Vagina (tissue), 2 donors: ENCODE measurements at regions of chr17 and their contacts with region 1.

Region 1: GRCh38 chr17:81339534-81340296 is 44.6 kb upstream of the SLC38A10 start:
- DNase-seq: no peak
- H3K4me3 ChIP-seq: no peak overlapping the region
- H3K27ac ChIP-seq: no peak overlapping the region
- H3K4me1 ChIP-seq: peaks cover 77% of the 10 kb centered on the region
- H3K27me3 ChIP-seq: no peaks in the 10 kb centered on the region
- CTCF ChIP-seq: no peak
- POLR2A ChIP-seq: no peak

Region 2: DNA sequence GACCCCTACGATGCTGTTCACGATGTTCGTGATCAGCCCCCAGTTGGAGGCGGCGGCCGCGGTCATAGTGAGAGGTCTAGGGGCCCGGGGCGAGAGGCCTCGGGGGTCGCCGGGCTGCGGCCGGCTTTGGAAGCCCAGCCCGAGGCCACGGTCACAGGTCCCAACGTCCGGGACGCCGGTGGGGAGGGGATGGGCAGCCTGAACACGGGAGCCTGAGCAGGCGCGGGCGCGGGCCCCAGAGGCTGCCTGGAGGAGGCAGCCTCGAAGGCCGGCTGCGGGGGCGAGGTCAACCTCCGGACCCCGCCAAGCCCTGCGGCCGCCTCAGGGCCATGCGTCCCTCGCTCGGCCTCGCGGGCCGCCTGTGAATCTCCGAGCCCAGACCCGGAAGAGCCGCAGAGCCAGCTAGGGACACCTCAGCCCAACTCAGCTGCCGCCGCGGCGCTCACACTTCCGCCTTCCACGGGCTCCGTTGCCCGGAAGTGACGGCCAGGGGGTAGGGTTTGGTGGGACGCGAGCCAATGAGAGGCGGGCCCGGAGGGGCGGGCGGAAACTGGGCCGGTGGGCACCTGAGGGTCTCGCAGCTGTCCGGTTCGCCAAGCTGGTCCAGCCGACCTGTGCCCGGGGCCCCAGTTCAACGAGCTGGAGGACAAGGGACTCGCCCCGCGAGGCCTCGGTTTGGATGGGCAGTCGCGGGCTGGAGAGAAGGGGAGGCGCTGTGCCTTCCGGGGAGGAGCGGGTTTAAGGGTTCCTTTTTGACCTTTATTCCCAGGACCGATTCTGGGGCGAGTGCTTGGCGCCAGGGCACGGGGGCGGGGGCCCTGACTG is 44.6 kb before region 1 on chr17 and contains the start of gene SLC38A10:
- intact Hi-C with region 1: loop called (anchors 5 kb)
- DNase-seq: no peak
- H3K4me3 ChIP-seq: peak within 1 kb of the TSS; percentile 66 to 67
- H3K27ac ChIP-seq: peak within 1 kb of the TSS; percentile 91
- H3K4me1 ChIP-seq: peaks cover 45% of the 10 kb centered on the region
- H3K27me3 ChIP-seq: no peaks in the 10 kb centered on the region
- CTCF ChIP-seq: peak in 1 of 3 experiments; percentile 18
- POLR2A ChIP-seq: peak in 1 of 2 donors; percentile 97
- total RNA-seq, gene SLC38A10: 67.5 TPM